Activated CD4-positive, alpha-beta memory T cell treated with anti-CD3 and anti-CD28 coated beads for 36 hours (primary cell): ENCODE measurements at regions of chr5 and their contacts with region 1.

Region 1: DNA sequence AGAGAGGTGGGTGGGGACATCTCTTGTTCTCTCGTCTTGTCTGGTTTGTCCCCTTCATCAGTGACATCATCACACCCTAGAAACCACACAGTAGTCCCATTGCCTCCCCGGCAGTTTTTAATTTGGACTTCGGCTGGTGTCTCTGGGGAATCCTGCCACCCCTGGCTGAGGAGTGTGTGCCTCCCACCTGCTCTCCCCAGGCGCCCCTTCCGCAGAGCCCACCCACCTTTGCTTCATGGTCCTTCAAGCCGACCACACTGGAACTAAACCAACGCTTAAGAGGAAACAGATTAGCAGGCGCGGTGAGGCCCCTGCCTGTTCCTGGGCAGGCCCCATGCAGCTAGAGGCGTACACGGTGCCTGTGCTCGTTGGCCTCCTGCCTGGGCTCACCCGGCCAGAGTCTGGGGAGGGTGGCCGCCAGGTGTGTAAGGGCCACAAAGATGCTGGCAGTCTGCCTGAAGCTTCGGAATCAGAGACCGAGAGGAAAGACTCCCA is 107.6 kb upstream of the SPRY4 start:
- DNase-seq: peak; percentile 57
- H3K4me3 Mint-ChIP-seq: peak overlapping the region; percentile 54
- H3K27ac Mint-ChIP-seq: peak overlapping the region; percentile 81
- H3K4me1 Mint-ChIP-seq: peaks cover 35% of the 10 kb centered on the region
- H3K27me3 Mint-ChIP-seq: no peaks in the 10 kb centered on the region

Region 2: DNA sequence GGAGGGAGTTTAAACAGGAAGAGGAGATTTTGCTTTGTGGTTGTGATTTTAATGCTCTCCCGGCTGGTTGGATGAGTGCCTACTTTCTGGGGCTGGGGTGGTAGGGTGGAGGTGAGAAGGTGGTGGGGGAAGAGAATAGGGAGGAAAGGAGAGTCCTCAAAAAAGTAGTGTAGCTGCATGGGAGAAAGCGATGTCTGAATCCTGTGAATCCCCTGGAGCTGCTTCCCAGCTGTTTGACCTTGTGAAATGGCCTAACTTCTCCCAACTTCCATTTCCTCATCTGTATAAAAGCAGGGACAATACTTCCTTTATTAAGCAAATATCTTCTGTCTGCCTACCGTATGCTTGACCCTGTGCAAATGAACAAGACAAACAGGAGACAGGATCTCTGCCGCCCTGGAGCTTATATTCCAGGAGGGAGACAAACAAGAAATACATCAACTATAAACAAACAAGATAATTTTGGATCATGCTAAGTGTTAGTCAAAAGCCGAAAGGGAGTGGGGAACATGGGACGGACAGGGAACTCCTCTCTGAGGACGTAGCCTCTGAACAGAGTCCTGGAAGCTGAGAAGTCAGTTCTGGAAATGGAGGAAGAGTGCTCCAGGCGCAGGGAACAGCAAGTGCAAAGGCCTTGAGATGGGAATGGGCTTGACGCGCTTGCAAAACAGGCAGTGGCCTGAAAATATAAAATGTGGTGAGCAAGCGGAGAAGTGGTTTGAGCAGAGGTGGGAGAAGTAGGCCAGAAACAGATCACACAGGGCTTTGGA is 211.1 kb before region 1 on chr5:
- CTCF ChIA-PET with region 1: no interaction called
- POLR2A ChIA-PET with region 1: no interaction called
- intact Hi-C with region 1: loop called (anchors 5 kb)
- DNase-seq: no peak
- H3K4me3 Mint-ChIP-seq: no peak overlapping the region
- H3K27ac Mint-ChIP-seq: no peak overlapping the region
- H3K4me1 Mint-ChIP-seq: peaks cover 29% of the 10 kb centered on the region
- H3K27me3 Mint-ChIP-seq: no peaks in the 10 kb centered on the region

Region 3: DNA sequence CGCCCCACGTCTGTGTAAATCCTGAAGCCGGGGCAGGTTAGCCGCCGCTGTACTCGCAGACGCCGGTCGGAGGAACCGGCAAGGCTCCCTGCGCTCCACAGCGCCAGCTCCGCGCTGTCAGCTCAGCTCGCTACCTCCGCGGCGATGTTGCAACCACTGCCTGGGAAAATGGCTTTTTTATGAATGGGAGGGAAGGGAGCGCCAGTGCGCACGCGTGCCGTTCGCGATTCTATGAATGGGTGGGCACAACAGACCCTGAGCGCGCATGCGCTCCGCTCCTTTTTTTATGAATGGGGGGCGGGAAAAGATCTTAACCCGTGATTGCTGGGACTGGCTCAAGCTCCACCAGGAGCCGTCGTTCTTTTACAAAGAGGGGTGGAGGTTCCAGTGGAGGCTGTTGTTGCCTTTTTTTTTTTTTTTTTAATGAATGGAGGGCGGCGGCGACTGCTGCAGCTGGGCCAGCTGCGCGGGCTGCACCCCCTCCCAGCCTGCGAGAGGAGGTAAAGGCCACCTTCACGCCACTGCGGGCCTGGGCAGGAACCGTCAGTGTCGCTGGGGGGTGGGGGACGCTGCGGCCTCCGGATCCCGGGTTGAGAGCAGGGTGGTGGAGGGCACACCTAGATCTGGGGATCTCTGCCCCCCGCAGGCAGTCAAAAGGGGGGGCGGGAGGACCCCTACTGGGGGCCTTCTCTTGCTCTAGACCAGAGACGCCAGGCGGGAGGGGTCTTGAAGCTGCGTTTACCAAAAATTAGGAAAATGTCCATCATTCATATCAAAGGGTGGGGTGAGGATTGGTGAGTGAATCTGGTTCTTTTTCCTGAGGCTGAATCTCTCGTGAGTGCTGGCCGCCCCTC is 107.3 kb before region 1 on chr5 and contains the start of gene SPRY4:
- CTCF ChIA-PET with region 1: interaction called, 3 read pairs
- POLR2A ChIA-PET with region 1: no interaction called
- intact Hi-C with region 1: loop called (anchors 10 kb)
- DNase-seq: peak; percentile 94
- H3K4me3 Mint-ChIP-seq: peak within 1 kb of the TSS; percentile 78
- H3K27ac Mint-ChIP-seq: no peak within 1 kb of the TSS
- H3K4me1 Mint-ChIP-seq: peaks cover 26% of the 10 kb centered on the region
- H3K27me3 Mint-ChIP-seq: peaks cover 48% of the 10 kb centered on the region
- total RNA-seq, gene SPRY4: 1.1 to 1.2 TPM

Region 4: DNA sequence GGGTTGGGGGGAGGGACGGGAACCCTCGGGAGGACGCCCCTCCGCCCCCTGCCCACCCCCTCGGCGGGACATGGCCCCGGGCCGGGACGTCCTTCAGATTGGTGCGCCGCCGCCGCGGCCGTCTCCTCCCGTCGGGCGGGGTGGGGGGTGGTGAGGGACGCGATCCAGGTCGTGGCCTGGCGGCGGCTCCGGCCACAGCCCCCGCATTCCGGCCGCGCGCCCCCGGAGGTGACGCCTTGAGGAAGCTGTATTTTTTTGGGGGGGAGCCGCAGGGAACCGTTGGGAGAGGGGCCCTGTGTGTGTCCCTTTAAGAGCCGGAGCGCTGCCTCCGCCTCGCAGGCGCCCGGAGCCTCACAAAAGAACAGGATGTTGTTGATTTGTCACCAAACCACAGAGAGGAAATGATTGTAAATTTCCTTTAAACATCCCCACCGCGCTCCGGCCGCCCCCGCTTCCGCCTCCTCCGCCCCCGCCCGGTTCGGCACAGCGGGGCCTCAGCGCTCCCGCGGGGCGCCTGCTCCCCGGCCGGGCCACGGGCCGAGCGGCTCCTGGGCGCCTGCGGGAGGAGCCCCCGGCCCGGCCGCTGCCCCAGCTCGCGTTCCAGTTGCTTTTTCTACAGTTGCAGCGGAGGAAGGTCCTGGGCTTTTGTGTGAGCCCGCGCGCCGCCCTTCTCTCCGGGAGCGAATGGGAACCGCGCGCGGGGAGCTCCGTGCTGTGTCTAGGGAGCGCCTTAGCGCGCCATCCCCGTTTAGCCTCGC is 75.5 kb before region 1 on chr5:
- CTCF ChIA-PET with region 1: interaction called, 3 read pairs
- POLR2A ChIA-PET with region 1: interaction called, 7 read pairs
- intact Hi-C with region 1: loop called (anchors 2 kb)
- DNase-seq: peak; percentile 95
- H3K4me3 Mint-ChIP-seq: peak overlapping the region; percentile 71
- H3K27ac Mint-ChIP-seq: peak overlapping the region; percentile 91
- H3K4me1 Mint-ChIP-seq: peaks cover 38% of the 10 kb centered on the region
- H3K27me3 Mint-ChIP-seq: no peaks in the 10 kb centered on the region

Region 5: DNA sequence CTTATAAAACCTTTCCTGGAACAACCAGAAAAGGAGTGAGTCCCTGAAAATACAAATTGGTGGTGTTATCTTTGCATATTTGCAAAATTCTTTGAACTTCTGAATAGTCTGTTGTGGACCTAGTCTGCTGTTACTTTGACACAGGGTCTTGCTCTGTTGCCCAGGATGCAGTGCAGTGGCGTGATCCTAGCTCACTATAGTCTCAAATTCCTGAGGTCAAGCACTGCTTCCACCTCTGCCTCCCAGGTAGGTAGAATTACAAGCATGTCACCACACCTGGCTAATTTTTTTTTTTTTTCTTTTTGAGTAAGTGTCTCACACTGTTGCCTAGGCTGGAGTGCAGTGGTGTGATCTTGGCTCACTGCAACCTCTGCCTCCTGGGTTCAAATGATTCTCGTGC is 63.9 kb before region 1 on chr5:
- CTCF ChIA-PET with region 1: no interaction called
- POLR2A ChIA-PET with region 1: no interaction called
- intact Hi-C with region 1: no loop called
- DNase-seq: no peak
- H3K4me3 Mint-ChIP-seq: no peak overlapping the region
- H3K27ac Mint-ChIP-seq: no peak overlapping the region
- H3K4me1 Mint-ChIP-seq: peaks cover 6% of the 10 kb centered on the region
- H3K27me3 Mint-ChIP-seq: no peaks in the 10 kb centered on the region

Region 6: DNA sequence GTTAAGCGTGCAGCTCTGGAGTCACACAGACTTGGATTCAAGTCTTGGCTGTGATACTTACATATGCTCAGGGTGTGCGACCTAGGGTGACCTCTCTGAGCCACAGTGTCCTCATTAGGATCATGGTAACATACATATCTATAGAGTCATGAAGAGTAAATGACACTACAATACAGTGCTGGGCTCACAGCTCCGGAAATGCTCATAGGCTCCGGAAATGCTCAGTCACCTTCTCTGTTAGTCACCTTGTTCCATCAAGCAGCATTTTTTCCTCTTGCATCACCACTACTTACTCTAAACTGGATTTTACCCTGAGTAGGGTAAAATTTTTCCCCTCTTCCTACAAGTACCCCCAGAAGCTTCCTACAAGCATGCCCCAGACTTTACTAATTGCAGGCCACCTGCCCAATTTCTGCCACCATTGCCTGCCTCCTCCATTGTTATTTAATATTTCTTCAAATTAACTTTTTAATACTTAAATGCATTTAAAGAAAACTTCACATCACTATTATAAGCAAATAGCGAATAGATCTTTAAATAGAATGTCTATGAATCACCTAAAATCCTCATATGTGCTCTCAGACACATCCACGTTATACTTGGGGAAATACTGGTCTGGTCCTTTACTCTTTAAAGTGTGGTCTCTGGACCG is 40.0 kb after region 1 on chr5:
- CTCF ChIA-PET with region 1: no interaction called
- POLR2A ChIA-PET with region 1: no interaction called
- intact Hi-C with region 1: loop called (anchors 1 kb)
- DNase-seq: peak; percentile 84
- H3K4me3 Mint-ChIP-seq: peak overlapping the region; percentile 27
- H3K27ac Mint-ChIP-seq: peak overlapping the region; percentile 85
- H3K4me1 Mint-ChIP-seq: peaks cover 22% of the 10 kb centered on the region
- H3K27me3 Mint-ChIP-seq: no peaks in the 10 kb centered on the region

Region 7: DNA sequence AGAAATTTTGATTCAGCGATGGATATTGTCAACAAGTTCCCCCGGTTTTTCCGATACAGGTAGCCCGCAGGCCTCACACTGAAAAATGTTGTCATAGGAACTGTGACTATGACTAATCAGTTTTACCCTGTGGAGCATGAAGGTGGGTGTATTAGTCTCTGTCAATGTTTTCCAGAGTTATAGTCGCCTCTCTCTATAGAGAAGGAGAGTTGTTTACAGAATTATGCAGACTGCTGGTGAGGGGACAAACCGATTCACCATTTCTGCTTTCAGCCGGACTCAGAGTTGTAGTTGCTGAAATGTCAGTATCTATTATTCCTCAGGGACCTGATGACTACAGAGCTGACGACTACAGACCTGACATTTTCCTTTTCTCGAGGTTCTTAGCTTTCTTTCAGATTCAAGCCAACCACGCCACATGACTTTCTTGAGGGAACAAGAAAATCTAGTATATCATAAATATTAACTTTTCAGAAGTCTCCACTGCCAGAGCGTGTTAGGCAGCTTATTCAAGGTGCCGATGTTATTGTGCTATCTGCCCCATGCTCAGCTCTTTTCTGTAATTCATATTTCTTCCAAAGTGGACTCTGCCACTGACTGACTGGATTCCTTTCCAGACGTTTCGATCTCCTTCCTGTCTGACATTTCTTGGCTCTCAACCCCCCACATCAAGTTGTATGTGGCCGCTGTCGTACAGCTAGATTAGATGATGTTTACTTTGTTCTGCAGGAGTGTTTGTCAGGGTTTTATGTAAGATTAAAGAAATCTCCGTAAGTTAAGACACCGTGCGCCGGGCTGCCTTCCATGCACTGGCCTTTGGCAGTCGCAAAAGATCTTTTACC is 75.3 kb after region 1 on chr5:
- CTCF ChIA-PET with region 1: no interaction called
- POLR2A ChIA-PET with region 1: no interaction called
- intact Hi-C with region 1: loop called (anchors 2 kb)
- DNase-seq: peak; percentile 65
- H3K4me3 Mint-ChIP-seq: no peak overlapping the region
- H3K27ac Mint-ChIP-seq: peak overlapping the region; percentile 46
- H3K4me1 Mint-ChIP-seq: peaks cover 57% of the 10 kb centered on the region
- H3K27me3 Mint-ChIP-seq: no peaks in the 10 kb centered on the region

Region 8: GRCh38 chr5:142548739-142549275 is 116.4 kb after region 1 on chr5:
- CTCF ChIA-PET with region 1: no interaction called
- POLR2A ChIA-PET with region 1: no interaction called
- intact Hi-C with region 1: loop called (anchors 5 kb)
- DNase-seq: peak; percentile 45
- H3K4me3 Mint-ChIP-seq: no peak overlapping the region
- H3K27ac Mint-ChIP-seq: no peak overlapping the region
- H3K4me1 Mint-ChIP-seq: peaks cover 18% of the 10 kb centered on the region
- H3K27me3 Mint-ChIP-seq: peaks cover 8% of the 10 kb centered on the region

Region 9: GRCh38 chr5:142703153-142703552 is 270.7 kb after region 1 on chr5:
- CTCF ChIA-PET with region 1: no interaction called
- POLR2A ChIA-PET with region 1: no interaction called
- intact Hi-C with region 1: no loop called
- DNase-seq: no peak
- H3K4me3 Mint-ChIP-seq: no peak overlapping the region
- H3K27ac Mint-ChIP-seq: no peak overlapping the region
- H3K4me1 Mint-ChIP-seq: no peaks in the 10 kb centered on the region
- H3K27me3 Mint-ChIP-seq: peaks cover 7% of the 10 kb centered on the region